MCF 10A (cell line): ENCODE measurements at regions of chr9 and their contacts with region 1.

Region 1: GRCh38 chr9:93962561-93963440 is 7.6 kb upstream of the BARX1 start:
- DNase-seq: peak; percentile 92
- H3K4me3 Mint-ChIP-seq: no peak overlapping the region
- H3K27ac Mint-ChIP-seq: peak overlapping the region; percentile 2
- H3K4me1 Mint-ChIP-seq: peaks cover 8% of the 10 kb centered on the region
- H3K27me3 Mint-ChIP-seq: no peaks in the 10 kb centered on the region
- CTCF ChIP-seq: peak; percentile 75

Region 2: DNA sequence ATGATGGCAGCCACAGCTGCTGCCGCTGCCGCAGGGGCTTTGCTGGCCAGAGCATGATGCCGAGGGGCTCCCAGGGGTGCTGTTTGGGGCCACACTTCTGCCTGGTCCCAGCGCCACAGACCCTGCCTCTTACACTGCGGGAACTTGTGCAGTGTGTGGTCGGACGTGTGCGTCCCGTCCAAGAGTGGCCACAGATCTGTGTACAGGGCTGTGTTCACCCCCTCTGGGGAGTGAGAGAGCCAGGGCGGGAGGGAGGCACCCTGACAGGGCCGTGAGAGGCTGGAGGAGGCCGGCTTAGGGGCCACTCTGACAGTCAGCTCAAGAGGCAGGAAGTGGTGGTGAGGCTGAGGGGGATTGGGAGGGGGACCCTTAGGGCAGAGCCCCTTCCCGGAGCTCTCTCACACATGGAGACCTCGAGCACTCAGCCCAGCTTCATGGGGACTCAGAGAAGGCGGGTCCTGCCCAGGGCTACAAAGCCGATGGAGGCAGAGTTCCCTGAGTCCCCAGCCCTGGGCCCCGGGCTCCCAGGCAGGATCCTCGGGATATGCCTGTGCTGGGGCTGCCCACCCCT is 879.9 kb before region 1 on chr9:
- CTCF ChIA-PET with region 1: no interaction called
- POLR2A ChIA-PET with region 1: no interaction called
- intact Hi-C with region 1: no loop called
- DNase-seq: no peak
- H3K4me3 Mint-ChIP-seq: no peak overlapping the region
- H3K27ac Mint-ChIP-seq: no peak overlapping the region
- H3K4me1 Mint-ChIP-seq: no peaks in the 10 kb centered on the region
- H3K27me3 Mint-ChIP-seq: no peaks in the 10 kb centered on the region
- CTCF ChIP-seq: no peak

Region 3: DNA sequence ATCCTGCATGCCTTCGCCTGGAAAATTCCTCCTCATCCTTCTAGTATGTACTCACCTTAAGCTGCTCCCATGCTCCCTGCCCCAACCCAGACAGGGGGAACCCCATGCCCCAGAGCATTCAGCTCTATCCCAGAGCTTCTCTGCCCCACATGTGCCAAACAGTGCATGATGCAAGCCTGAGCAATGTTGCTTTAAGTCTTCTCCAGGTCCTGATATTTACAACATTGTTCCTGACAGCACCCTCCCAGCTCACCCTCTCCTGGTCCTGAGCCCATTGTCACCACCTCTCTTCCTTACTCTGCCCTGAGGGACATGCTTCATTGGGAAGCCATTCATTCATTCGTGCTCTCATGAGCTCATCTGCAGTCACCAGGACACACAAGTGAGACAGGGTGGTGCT is 15.8 kb after region 1 on chr9:
- CTCF ChIA-PET with region 1: interaction called, 47 read pairs
- POLR2A ChIA-PET with region 1: no interaction called
- intact Hi-C with region 1: no loop called
- DNase-seq: peak; percentile 39
- H3K4me3 Mint-ChIP-seq: no peak overlapping the region
- H3K27ac Mint-ChIP-seq: no peak overlapping the region
- H3K4me1 Mint-ChIP-seq: peaks cover 20% of the 10 kb centered on the region
- H3K27me3 Mint-ChIP-seq: peaks cover 18% of the 10 kb centered on the region
- CTCF ChIP-seq: no peak

Region 4: DNA sequence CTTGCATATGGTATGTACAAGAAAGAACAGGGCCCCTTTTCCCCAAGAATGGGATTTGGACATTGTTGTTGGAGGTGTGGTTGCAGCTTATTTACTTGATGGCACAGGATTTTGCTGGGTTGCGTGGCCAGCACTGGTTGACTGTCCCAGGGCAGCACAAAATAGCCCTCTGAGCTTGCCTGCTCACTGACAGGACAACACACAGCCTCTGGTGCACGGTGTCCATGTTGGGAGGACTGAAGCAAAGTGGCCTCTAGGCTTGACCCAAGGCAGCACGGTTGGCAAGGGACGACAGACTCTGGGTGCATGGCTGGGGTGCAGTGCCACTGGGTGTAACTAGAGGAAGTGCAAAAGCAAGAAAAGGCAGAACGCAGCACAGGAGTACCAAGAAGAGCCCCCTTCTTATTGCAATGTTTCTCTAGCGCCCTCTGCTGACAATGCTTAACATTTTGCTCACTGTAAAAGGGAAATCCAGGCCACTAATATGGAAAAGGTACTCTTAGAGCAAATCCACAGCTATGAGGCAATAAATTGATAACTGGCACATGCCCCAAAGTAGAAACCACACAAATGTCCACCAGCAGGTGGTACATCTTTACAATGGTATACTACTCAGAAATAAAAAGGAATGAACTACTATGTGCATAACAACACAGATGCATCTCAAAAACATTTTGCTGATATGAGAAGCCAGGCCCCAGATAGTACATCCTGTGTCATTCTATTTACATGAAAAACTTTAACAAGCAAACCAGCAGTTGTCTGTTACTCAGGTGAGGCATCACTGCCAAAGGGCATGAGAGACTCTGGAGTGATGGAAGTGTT is 39.7 kb after region 1 on chr9:
- CTCF ChIA-PET with region 1: interaction called, 6 read pairs
- POLR2A ChIA-PET with region 1: no interaction called
- intact Hi-C with region 1: loop called (anchors 2 kb)
- DNase-seq: peak; percentile 70
- H3K4me3 Mint-ChIP-seq: no peak overlapping the region
- H3K27ac Mint-ChIP-seq: no peak overlapping the region
- H3K4me1 Mint-ChIP-seq: peaks cover 6% of the 10 kb centered on the region
- H3K27me3 Mint-ChIP-seq: peaks cover 12% of the 10 kb centered on the region
- CTCF ChIP-seq: peak; percentile 66

Region 5: GRCh38 chr9:94213511-94214124 is 250.8 kb after region 1 on chr9:
- CTCF ChIA-PET with region 1: interaction called, 48 read pairs
- POLR2A ChIA-PET with region 1: no interaction called
- intact Hi-C with region 1: loop called (anchors 2 kb)
- DNase-seq: peak; percentile 85
- H3K4me3 Mint-ChIP-seq: no peak overlapping the region
- H3K27ac Mint-ChIP-seq: no peak overlapping the region
- H3K4me1 Mint-ChIP-seq: peaks cover 11% of the 10 kb centered on the region
- H3K27me3 Mint-ChIP-seq: no peaks in the 10 kb centered on the region
- CTCF ChIP-seq: peak; percentile 72

Region 6: DNA sequence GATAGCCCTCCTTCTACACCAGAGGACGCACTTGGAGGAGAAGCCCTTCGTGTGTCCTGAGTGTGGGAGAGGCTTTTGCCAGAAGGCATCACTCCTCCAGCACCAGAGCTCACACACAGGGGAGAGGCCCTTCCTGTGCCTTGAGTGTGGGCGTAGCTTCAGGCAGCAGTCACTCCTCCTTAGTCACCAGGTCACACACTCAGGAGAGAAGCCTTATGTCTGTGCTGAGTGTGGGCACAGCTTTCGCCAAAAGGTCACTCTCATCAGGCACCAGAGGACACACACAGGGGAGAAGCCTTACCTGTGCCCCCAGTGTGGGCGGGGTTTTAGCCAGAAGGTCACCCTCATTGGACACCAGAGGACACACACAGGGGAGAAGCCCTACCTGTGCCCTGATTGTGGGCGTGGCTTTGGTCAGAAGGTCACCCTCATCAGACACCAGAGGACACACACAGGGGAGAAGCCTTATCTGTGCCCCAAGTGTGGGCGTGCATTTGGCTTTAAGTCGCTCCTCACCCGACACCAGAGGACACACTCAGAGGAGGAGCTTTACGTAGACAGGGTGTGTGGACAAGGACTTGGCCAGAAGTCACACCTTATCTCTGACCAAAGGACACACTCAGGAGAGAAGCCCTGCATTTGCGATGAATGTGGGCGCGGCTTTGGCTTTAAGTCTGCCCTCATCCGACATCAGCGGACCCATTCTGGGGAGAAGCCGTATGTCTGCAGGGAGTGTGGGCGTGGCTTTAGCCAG is 337.9 kb after region 1 on chr9:
- CTCF ChIA-PET with region 1: no interaction called
- POLR2A ChIA-PET with region 1: no interaction called
- intact Hi-C with region 1: no loop called
- DNase-seq: no peak
- H3K4me3 Mint-ChIP-seq: no peak overlapping the region
- H3K27ac Mint-ChIP-seq: no peak overlapping the region
- H3K4me1 Mint-ChIP-seq: no peaks in the 10 kb centered on the region
- H3K27me3 Mint-ChIP-seq: no peaks in the 10 kb centered on the region
- CTCF ChIP-seq: no peak